ENCODE measurements at regions of chr7 and their contacts with region 1.

Region 1: GRCh38 chr7:143008007-143008901 is 18.7 kb downstream of the OR9A2 start:
- DNase-seq: peak; percentile 89
- H3K4me3 Mint-ChIP-seq: no peak overlapping the region
- H3K27ac Mint-ChIP-seq: no peak overlapping the region
- H3K4me1 Mint-ChIP-seq: peaks cover 3% of the 10 kb centered on the region
- H3K27me3 Mint-ChIP-seq: peaks cover 2% of the 10 kb centered on the region

Region 2: GRCh38 chr7:142323706-142324105 is 684.5 kb before region 1 on chr7:
- CTCF ChIA-PET with region 1: interaction called, 9 read pairs
- intact Hi-C with region 1: loop called (anchors 2 kb)
- DNase-seq: peak; percentile 81
- H3K4me3 Mint-ChIP-seq: peak overlapping the region; percentile 41
- H3K27ac Mint-ChIP-seq: peak overlapping the region; percentile 73
- H3K4me1 Mint-ChIP-seq: peaks cover 29% of the 10 kb centered on the region
- H3K27me3 Mint-ChIP-seq: no peaks in the 10 kb centered on the region

Region 3: GRCh38 chr7:142496545-142497041 is 511.7 kb before region 1 on chr7:
- CTCF ChIA-PET with region 1: no interaction called
- intact Hi-C with region 1: loop called (anchors 5 kb)
- DNase-seq: peak; percentile 40
- H3K4me3 Mint-ChIP-seq: peak overlapping the region; percentile 29
- H3K27ac Mint-ChIP-seq: peak overlapping the region; percentile 52
- H3K4me1 Mint-ChIP-seq: peaks cover 70% of the 10 kb centered on the region
- H3K27me3 Mint-ChIP-seq: no peaks in the 10 kb centered on the region

Region 4: DNA sequence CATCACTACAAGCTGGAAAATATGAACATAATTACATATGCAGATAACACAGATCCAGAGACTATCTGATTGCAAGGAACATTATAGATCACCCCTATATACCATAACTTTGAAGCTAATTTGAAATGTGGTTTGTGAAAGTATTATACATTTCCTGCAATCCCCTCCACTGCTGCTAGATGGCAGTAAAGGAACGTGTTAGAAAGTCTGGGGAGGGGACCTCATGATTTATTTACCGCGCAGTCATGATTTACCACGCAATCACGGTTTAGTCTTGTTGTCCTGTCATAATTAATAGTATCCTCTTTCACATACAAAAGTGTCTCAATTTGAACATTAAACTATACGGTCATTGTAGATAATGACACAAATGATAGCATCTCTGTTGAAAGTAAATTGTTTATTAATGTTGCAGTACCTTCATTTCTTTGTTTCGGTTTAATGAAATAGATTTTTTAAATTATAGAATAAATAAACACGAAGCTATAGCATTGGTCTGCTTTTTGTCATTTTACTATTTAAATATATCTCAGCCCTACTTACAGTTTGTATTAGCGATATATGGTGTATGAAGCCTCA is 404.3 kb before region 1 on chr7:
- CTCF ChIA-PET with region 1: interaction called, 6 read pairs
- intact Hi-C with region 1: loop called (anchors 1 kb)
- DNase-seq: peak; percentile 71
- H3K4me3 Mint-ChIP-seq: no peak overlapping the region
- H3K27ac Mint-ChIP-seq: peak overlapping the region; percentile 68
- H3K4me1 Mint-ChIP-seq: peaks cover 6% of the 10 kb centered on the region
- H3K27me3 Mint-ChIP-seq: no peaks in the 10 kb centered on the region

Region 5: DNA sequence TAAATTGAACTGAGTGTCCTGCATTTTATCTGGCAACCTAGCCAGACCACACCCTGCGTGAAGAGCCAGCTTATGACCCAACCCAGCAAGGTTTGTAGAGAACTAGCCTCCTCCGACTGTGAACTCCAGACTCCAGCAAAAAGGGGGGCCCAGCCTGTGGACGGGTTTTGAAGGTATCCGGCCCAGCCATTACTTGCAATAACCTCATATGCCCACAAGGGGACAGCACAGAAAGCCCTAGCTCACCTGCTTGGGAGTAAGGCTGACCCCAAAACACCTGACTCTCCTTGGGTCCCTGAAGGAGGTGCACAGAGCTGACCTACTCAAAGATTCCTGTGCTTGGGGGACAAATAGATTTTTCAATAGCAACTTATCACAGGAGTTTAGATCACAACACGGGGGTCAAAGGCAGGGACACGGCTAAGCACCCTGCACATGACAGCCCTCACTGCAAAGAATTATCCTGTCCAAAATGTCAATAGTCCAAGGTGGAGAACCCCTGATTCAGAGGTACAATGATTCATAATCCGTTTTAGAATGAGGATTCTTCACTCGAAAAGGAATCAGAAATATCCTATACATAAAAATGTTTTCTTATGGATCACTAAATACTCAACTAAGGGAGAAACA is 127.3 kb before region 1 on chr7:
- CTCF ChIA-PET with region 1: interaction called, 65 read pairs
- intact Hi-C with region 1: loop called (anchors 1 kb)
- DNase-seq: peak; percentile 69
- H3K4me3 Mint-ChIP-seq: no peak overlapping the region
- H3K27ac Mint-ChIP-seq: no peak overlapping the region
- H3K4me1 Mint-ChIP-seq: peaks cover 1% of the 10 kb centered on the region
- H3K27me3 Mint-ChIP-seq: no peaks in the 10 kb centered on the region

Region 6: DNA sequence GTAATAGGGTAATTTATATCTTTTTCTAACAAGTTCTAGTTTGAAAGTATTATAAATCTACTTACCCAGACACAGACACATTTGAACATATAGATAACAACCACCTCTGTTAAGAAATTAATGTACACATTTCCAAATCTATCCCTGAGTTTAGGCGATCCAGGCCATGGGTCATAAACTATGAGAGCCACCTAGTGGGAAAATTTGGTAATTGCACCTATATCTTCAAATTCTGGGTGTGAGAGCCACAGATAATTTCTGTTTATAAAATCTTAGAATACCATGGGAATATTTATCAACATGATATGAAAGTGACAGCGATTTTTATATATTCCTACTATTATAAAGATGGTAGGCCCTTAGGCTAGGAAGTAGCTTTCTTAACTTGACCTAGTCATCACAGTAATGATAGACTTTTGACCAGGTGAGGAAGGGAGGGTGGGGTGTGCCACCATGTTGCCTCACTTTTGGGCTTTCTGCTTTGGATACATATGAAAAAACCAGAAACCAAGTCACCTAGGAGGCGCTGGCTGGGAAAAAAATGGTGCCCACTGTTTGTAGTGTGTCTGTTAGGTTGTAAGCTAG is 408.4 kb after region 1 on chr7:
- CTCF ChIA-PET with region 1: no interaction called
- intact Hi-C with region 1: loop called (anchors 5 kb)
- DNase-seq: no peak
- H3K4me3 Mint-ChIP-seq: no peak overlapping the region
- H3K27ac Mint-ChIP-seq: no peak overlapping the region
- H3K4me1 Mint-ChIP-seq: peaks cover 22% of the 10 kb centered on the region
- H3K27me3 Mint-ChIP-seq: no peaks in the 10 kb centered on the region

Region 7: GRCh38 chr7:144063710-144064109 is 1055.5 kb after region 1 on chr7:
- CTCF ChIA-PET with region 1: no interaction called
- intact Hi-C with region 1: no loop called
- DNase-seq: no peak
- H3K4me3 Mint-ChIP-seq: no peak overlapping the region
- H3K27ac Mint-ChIP-seq: no peak overlapping the region
- H3K4me1 Mint-ChIP-seq: no peaks in the 10 kb centered on the region
- H3K27me3 Mint-ChIP-seq: peaks cover 28% of the 10 kb centered on the region

Region 8: DNA sequence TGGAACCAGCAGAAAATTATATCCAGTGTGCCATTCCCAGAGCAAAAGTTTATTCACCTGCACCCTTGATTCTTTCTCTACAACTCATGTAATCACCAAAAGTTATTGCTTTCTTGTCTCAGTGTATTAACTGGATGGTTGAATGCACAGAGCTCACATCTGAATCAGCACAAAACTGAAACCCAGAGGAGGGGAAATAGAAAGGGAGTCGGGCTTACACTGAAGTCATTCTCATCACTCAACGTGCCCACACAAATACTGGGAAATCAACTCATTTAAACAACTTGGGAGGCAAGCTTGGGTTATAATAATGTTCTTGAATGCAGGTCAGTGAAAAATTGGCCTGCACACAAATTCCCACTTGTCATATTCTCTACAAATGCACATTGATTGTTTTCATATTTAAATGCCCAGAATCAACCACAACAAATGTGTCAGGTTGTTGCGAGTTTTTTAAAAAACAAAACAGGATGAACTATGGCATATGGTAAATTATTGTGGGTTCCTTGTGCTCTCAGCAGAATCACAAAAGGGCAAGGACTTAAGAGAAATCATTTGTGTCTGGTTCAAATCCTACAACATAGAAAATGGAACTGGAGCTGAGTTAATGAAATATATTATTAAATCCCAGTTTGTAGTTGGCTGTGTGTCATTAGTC is 1521.1 kb after region 1 on chr7:
- CTCF ChIA-PET with region 1: no interaction called
- intact Hi-C with region 1: no loop called
- DNase-seq: no peak
- H3K4me3 Mint-ChIP-seq: no peak overlapping the region
- H3K27ac Mint-ChIP-seq: no peak overlapping the region
- H3K4me1 Mint-ChIP-seq: peaks cover 4% of the 10 kb centered on the region
- H3K27me3 Mint-ChIP-seq: no peaks in the 10 kb centered on the region

Measured in activated naive CD4-positive, alpha-beta T cell treated with anti-CD3 and anti-CD28 coated beads for 36 hours (primary cell).